ENCODE measurements at regions of chr21 and their contacts with region 1.

Region 1: GRCh38 chr21:33789697-33790096 is 125.9 kb downstream of the ATP5PO start:
- DNase-seq: no peak
- ATAC-seq: no peak
- H3K4me3 ChIP-seq: no peak overlapping the region
- H3K27ac ChIP-seq: no peak overlapping the region
- H3K4me1 ChIP-seq: no peaks in the 10 kb centered on the region
- H3K27me3 ChIP-seq: no peaks in the 10 kb centered on the region
- CTCF ChIP-seq: no peak
- POLR2A ChIP-seq: no peak

Region 2: GRCh38 chr21:33767236-33767635 is 22.5 kb before region 1 on chr21:
- intact Hi-C with region 1: no loop called
- DNase-seq: no peak
- ATAC-seq: no peak
- H3K4me3 ChIP-seq: no peak overlapping the region
- H3K27ac ChIP-seq: no peak overlapping the region
- H3K4me1 ChIP-seq: peaks cover 0 to 6% (median 0%) of the 10 kb centered on the region in 12 donors
- H3K27me3 ChIP-seq: no peaks in the 10 kb centered on the region
- CTCF ChIP-seq: no peak
- POLR2A ChIP-seq: no peak

Region 3: GRCh38 chr21:33825915-33826314 is 36.2 kb after region 1 on chr21:
- intact Hi-C with region 1: loop called in 1 of 10 experiments (anchors 5 kb)
- DNase-seq: no peak
- ATAC-seq: peak in 2 of 4 donors; percentile 16 to 42
- H3K4me3 ChIP-seq: no peak overlapping the region
- H3K27ac ChIP-seq: peak overlapping the region in 2 of 12 donors; percentile 35 to 57
- H3K4me1 ChIP-seq: peaks cover 0 to 45% (median 10%) of the 10 kb centered on the region in 12 donors
- H3K27me3 ChIP-seq: no peaks in the 10 kb centered on the region
- CTCF ChIP-seq: no peak
- POLR2A ChIP-seq: no peak

Region 4: GRCh38 chr21:33844104-33844889 is 54.6 kb after region 1 on chr21:
- intact Hi-C with region 1: no loop called
- DNase-seq: peak in 2 of 5 donors; percentile 59 to 61
- ATAC-seq: peak; percentile 73 to 90 (median 82)
- H3K4me3 ChIP-seq: no peak overlapping the region
- H3K27ac ChIP-seq: no peak overlapping the region
- H3K4me1 ChIP-seq: peaks cover 0 to 32% (median 10%) of the 10 kb centered on the region in 12 donors
- H3K27me3 ChIP-seq: no peaks in the 10 kb centered on the region
- CTCF ChIP-seq: no peak
- POLR2A ChIP-seq: no peak

Region 5: GRCh38 chr21:34020005-34020847 is 230.5 kb after region 1 on chr21:
- intact Hi-C with region 1: no loop called
- DNase-seq: peak in 2 of 5 donors; percentile 29 to 45
- ATAC-seq: peak in 3 of 4 donors; percentile 55 to 68 (median 55)
- H3K4me3 ChIP-seq: no peak overlapping the region
- H3K27ac ChIP-seq: peak overlapping the region in 2 of 12 donors; percentile 6 to 66
- H3K4me1 ChIP-seq: peaks cover 0 to 59% (median 0%) of the 10 kb centered on the region in 12 donors
- H3K27me3 ChIP-seq: no peaks in the 10 kb centered on the region
- CTCF ChIP-seq: no peak
- POLR2A ChIP-seq: no peak

Measured in heart left ventricle (tissue), 16 donors.